GM12878 (cell line): ENCODE measurements at regions of chr12 and their contacts with region 1.

Region 1: DNA sequence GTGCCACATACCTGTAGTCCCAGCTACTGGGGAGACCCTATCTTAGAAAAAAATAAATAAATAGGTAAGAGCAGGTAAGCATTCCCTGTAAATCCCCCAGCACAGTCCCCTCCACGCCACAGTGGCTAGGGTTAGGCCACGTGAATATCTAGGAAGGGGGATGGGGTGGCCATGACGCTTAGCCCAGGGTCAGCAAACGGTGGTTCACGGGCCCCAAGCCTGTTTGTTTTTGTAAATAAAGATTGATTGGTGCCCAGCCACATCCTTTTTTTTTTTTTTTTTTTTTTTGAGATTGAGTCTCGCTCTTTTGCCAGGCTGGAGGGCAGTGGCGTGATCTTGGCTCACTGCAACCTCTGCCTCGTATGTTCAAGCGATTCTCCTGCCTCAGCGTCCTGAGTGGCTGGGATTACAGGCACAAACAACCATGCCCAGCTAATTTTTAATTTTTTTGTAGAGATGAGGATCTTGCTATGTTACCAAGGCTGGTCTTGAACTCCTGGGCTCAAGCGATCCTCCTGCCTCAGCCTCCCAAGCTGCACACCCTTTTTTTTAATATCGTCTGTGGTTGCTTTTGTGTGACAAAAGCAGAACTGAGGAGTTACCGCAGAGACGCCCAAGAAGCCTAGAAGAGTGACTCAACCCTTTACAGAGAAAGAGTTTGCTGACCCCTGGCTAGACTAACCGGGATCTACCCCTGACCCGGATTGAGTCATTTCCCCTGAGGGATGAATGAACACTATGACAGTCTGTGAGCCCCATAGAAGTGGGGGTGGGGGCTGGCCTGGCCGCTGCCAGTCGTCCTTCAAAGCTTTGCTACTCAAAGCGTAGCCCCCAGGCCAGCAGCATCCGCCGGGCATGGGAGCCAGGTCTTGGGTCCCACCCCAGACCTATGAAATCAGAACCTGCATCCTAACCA is 113.7 kb upstream of the NCOR2 start:
- DNase-seq: peak; percentile 71
- ATAC-seq: peak; percentile 94
- H3K4me3 ChIP-seq: no peak overlapping the region
- H3K27ac ChIP-seq: no peak overlapping the region
- H3K4me1 ChIP-seq: peaks cover 18% of the 10 kb centered on the region
- H3K27me3 ChIP-seq: 0 out of 4 replicates have a peak, but pooled peaks cover 0 to 3% of the 10 kb centered on the region in 2 experiments
- CTCF ChIP-seq: peak; percentile 37 to 67 (median 53); a peak in 5 of 6 replicates
- EP300 ChIP-seq: peak; percentile 44 to 82; a peak in 2 of 4 replicates
- POLR2A ChIP-seq: no peak
- RAD21 ChIP-seq: peak; percentile 75

Region 2: DNA sequence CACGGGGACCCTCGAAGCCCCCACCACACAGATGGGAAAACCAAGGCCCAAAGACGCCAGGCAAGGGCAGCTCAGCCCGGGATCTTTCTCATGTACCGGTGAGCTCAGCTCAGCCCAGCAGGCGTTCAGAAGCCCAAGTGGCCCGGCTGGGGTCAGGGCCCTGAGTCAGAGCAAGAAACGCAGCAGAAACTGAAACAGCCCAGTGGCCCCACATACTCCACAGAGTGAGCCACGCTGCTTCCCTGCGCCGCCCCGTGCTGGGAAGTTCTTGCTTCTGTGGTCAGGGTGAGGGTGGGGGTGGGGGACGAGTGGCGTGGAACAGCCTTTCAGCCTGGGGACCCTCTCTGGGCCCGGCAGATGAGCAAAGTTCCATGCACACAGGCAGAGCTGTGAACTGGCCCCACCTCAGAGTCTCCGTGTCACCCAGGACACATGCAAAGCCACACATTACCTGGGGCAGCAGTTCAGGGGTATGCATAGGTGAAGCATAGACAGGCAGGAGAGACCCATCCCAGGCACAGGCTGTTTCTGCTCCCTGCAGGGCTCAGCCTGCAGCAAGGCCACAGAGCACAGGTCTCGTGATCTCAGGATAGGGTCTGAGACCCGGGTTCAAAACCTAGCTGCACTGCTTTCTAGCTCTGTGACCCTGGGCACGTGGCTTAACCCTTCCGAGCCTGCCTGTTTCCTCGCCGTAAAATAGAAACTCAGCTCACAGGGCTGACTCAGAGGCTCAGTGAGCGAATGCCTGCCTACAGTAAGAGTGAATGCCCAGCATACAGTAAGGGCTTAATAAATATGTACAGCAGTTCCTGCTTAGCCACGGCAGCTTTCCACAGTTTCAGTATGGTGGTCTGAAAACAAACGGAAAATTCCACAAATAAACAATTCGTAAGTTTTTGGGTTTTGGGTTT is 135.4 kb before region 1 on chr12:
- CTCF ChIA-PET with region 1: no interaction called
- POLR2A ChIA-PET with region 1: interaction called, 3 read pairs
- RAD21 ChIA-PET with region 1: no interaction called
- SMC1A ChIA-PET with region 1: no interaction called
- in situ Hi-C with region 1: no loop called
- intact Hi-C with region 1: loop called (anchors 5 kb)
- DNase-seq: peak; percentile 76
- ATAC-seq: peak; percentile 95
- H3K4me3 ChIP-seq: peak overlapping the region; percentile 59
- H3K27ac ChIP-seq: peak overlapping the region; percentile 90
- H3K4me1 ChIP-seq: peaks cover 70% of the 10 kb centered on the region
- H3K27me3 ChIP-seq: no peaks in the 10 kb centered on the region
- CTCF ChIP-seq: no peak
- EP300 ChIP-seq: peak; percentile 61 to 72; a peak in 3 of 4 replicates
- POLR2A ChIP-seq: peak; percentile 37; the same call in 1 of the 2 replicates
- RAD21 ChIP-seq: no peak

Region 3: DNA sequence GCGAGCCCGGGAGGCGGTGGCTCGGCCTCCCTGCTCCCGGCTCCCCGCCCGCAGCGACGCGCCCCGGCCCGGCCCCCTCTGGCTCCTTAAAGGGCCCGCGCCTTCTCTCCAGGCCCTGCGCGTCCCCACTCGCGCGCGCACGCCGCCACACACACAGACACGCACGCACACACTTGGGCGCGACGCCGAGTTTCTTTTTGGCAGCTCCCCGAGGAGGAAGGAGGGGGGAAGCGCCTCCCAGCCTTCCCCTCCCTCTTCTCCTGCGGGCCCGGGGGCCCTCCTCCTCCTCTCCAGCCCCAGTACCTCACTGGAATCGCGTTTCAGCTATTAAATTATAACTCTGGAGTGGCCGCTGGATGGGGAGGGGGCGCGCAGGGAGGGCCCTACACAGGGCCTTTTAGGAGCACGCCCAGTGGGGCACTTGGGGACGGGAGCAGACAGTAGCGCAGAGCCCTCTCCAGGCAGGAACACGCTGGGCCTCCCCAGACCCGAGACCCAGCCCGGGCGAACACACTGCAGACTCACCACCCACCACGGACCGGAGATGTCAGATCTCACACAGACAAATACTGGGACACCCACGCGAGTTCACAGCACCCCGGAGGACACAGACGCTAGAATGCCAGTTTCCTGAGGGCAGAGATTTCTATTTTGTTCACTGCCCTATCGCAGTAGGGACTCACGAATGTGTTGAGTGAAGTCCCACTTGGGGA is 113.3 kb before region 1 on chr12:
- CTCF ChIA-PET with region 1: interaction called, 3 read pairs
- POLR2A ChIA-PET with region 1: no interaction called
- RAD21 ChIA-PET with region 1: no interaction called
- SMC1A ChIA-PET with region 1: no interaction called
- in situ Hi-C with region 1: no loop called
- intact Hi-C with region 1: loop called (anchors 2 kb)
- DNase-seq: no peak
- ATAC-seq: peak; percentile 70
- H3K4me3 ChIP-seq: peak overlapping the region; percentile 95
- H3K27ac ChIP-seq: peak overlapping the region; percentile 82
- H3K4me1 ChIP-seq: peaks cover 25% of the 10 kb centered on the region
- H3K27me3 ChIP-seq: no peaks in the 10 kb centered on the region
- CTCF ChIP-seq: peak in 1 of 3 experiments; percentile 14; a peak in 2 of 6 replicates
- EP300 ChIP-seq: no peak
- POLR2A ChIP-seq: peak; percentile 57
- RAD21 ChIP-seq: no peak

Region 4: GRCh38 chr12:124713436-124714082 is 32.4 kb after region 1 on chr12:
- CTCF ChIA-PET with region 1: interaction called, 3 read pairs
- POLR2A ChIA-PET with region 1: no interaction called
- RAD21 ChIA-PET with region 1: no interaction called
- SMC1A ChIA-PET with region 1: interaction called, 4 read pairs
- in situ Hi-C with region 1: no loop called
- intact Hi-C with region 1: loop called (anchors 1 kb)
- DNase-seq: peak; percentile 93
- ATAC-seq: peak; percentile 91
- H3K4me3 ChIP-seq: peak overlapping the region; percentile 32; the same call in 1 of the 2 replicates
- H3K27ac ChIP-seq: peak overlapping the region; percentile 79
- H3K4me1 ChIP-seq: peaks cover 17% of the 10 kb centered on the region
- H3K27me3 ChIP-seq: no peaks in the 10 kb centered on the region
- CTCF ChIP-seq: no peak
- EP300 ChIP-seq: peak; percentile 94 to 96
- POLR2A ChIP-seq: no peak
- RAD21 ChIP-seq: peak; percentile 29; the same call in 1 of the 2 replicates

Region 5: DNA sequence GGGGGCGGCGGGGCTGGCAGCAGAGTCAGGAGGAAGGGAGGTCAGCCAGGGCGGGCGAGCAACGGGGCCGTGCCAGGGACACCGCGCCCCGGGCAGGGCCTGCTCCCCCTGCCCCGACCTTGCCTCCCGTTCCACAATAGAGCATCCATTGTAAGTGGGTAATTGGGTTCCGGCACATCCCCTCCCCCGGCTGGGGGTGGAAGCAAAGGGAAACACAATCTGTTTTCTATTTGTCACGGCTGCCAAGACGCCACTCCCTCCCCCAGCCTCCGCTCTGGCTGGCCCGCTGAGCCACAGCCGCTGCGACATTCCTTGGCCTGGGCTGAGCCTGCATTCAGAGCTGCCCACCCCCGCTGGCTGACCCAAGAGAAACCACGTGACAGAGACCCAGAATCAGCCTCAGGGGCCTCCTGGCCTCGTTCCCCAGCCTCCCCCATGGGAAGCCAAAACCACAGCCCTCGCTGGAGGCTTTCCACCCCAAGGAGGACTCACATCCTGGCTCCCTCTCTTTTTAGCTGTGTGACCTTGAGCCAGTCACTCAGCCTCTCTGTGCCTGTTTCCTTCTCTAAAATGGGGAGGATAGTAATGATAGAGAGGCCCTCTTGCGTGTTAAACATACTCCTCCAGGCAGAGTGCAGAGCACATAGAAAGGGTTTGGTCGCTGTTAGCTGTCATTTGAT is 64.9 kb after region 1 on chr12:
- CTCF ChIA-PET with region 1: no interaction called
- POLR2A ChIA-PET with region 1: no interaction called
- RAD21 ChIA-PET with region 1: no interaction called
- SMC1A ChIA-PET with region 1: no interaction called
- in situ Hi-C with region 1: loop called (anchors 10 kb)
- intact Hi-C with region 1: no loop called
- DNase-seq: no peak
- ATAC-seq: peak; percentile 59
- H3K4me3 ChIP-seq: no peak overlapping the region
- H3K27ac ChIP-seq: no peak overlapping the region
- H3K4me1 ChIP-seq: peaks cover 6% of the 10 kb centered on the region
- H3K27me3 ChIP-seq: no peaks in the 10 kb centered on the region
- CTCF ChIP-seq: no peak
- EP300 ChIP-seq: no peak
- POLR2A ChIP-seq: no peak
- RAD21 ChIP-seq: no peak